T-cell (primary cell): ENCODE measurements at regions of chr1 and their contacts with region 1.

Region 1: DNA sequence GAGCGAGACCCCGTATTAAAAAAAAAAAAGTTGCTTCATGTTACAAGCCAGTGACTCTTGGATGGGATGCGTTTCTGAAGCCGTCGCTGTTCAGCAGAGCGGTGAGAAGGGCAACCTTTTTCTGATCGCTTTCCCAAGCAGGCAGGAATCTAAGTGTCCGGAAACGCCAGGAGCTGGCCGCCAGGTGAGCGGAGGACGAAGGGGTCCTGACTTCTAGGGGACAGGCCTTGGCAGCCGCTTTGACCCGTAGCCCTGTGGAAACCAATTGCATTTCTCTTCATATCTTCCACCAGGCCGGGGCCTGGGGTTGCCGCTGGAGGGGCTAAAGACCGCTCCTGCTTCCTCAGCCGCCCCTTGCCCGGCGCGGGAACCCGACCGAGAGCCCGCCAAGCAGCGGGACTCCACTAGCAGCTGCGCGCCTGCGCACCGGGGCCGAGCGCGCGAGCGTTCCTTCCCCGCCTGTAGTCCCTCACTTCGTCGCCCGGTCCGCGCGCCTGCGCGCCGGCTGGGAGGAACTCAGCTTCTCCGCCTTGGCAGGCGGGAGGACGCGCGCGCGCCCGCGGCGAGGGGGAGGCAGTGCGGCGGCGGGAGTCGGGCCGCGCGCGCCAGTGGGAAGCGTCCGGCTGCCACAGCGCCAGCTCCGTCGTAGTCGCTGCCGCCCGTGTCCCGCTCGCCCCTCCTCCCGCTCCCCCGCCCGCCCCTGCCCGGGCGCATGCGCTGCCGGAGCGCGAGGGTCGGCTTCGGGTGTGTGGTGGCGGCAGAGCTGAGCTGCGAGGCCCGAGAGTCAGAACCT is at the start of gene SPEN:
- DNase-seq: peak; percentile 93 to 100 (median 98)
- ATAC-seq: peak; percentile 82 to 86 (median 83)
- H3K4me3 ChIP-seq: peak within 1 kb of the TSS; percentile 93 to 95
- H3K4me3 Mint-ChIP-seq: peak within 1 kb of the TSS; percentile 97 to 98 (median 97)
- H3K27ac ChIP-seq: peak within 1 kb of the TSS; percentile 95
- H3K27ac Mint-ChIP-seq: peak within 1 kb of the TSS; percentile 96 to 97
- H3K4me1 ChIP-seq: peaks cover 25 to 33% of the 10 kb centered on the region in 2 experiments
- H3K4me1 Mint-ChIP-seq: peaks cover 49 to 58% (median 53%) of the 10 kb centered on the region in 3 donors
- H3K27me3 ChIP-seq: no peaks in the 10 kb centered on the region
- H3K27me3 Mint-ChIP-seq: no peaks in the 10 kb centered on the region
- total RNA-seq, gene SPEN: 69.9 to 81.1 (median 72.1) TPM

Region 2: DNA sequence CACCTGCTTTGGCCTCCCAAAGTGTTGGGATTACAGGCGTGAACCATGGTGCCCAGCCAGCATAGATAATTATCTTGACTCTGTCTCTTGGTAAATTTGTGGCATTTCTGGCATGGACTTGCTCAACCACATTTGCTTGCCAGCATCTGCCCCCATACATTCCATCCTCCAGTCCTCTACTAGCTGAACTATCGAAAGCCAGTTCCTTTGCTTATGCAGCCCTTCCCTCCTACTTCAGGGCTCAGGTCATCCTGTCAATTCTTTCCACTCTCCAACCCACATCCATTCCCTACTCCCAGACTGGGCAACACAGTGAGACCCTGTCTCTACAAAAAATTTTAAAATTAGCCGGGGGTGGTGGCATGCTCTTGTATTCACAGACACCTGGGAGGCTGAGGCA is 26.8 kb before region 1 on chr1:
- CTCF ChIA-PET with region 1: interaction called, 6 to 13 read pairs
- POLR2A ChIA-PET with region 1: interaction called in 1 of 2 experiments, 4 read pairs
- DNase-seq: no peak
- ATAC-seq: no peak
- H3K4me3 ChIP-seq: no peak overlapping the region
- H3K4me3 Mint-ChIP-seq: no peak overlapping the region
- H3K27ac ChIP-seq: no peak overlapping the region
- H3K27ac Mint-ChIP-seq: no peak overlapping the region
- H3K4me1 ChIP-seq: no peaks in the 10 kb centered on the region
- H3K4me1 Mint-ChIP-seq: peaks cover 3 to 6% (median 4%) of the 10 kb centered on the region in 3 donors
- H3K27me3 ChIP-seq: no peaks in the 10 kb centered on the region
- H3K27me3 Mint-ChIP-seq: no peaks in the 10 kb centered on the region